ENCODE measurements at regions of chr16 and their contacts with region 1.

Region 1: GRCh38 chr16:11356573-11357331 is 11.5 kb downstream of the RMI2 start:
- DNase-seq: peak; percentile 78 to 81 (median 81)
- ATAC-seq: peak; percentile 94 to 95 (median 94)
- H3K4me3 ChIP-seq: no peak overlapping the region
- H3K27ac ChIP-seq: no peak overlapping the region
- H3K4me1 ChIP-seq: no peaks in the 10 kb centered on the region
- H3K27me3 ChIP-seq: no peaks in the 10 kb centered on the region
- CTCF ChIP-seq: peak; percentile 67 to 76 (median 70)
- POLR2A ChIP-seq: no peak

Region 2: DNA sequence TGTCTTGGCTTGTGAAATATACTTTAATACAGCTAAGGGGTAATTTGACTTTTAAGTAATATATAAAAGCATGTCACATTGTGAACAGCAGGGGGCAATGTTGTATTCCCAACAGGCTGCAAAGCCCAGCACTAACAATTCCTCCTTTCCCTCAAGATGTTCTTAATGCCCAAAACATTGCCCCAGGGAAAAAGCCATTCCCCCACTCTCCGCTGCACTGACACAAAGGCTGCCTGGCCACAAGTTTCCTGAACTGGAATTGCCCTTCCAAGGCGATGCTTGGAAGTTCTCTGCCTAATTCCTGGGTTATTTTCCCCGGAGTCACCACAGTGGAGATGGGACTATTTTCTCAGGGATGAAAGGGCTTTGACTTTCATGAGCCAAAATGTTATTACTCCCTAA is 385.2 kb before region 1 on chr16:
- intact Hi-C with region 1: loop called (anchors 5 to 10 kb)
- DNase-seq: no peak
- ATAC-seq: peak; percentile 77 to 92 (median 86)
- H3K4me3 ChIP-seq: no peak overlapping the region
- H3K27ac ChIP-seq: no peak overlapping the region
- H3K4me1 ChIP-seq: no peaks in the 10 kb centered on the region
- H3K27me3 ChIP-seq: no peaks in the 10 kb centered on the region
- CTCF ChIP-seq: peak; percentile 78 to 83 (median 82)
- POLR2A ChIP-seq: no peak

Region 3: GRCh38 chr16:10979717-10980601 is 376.8 kb before region 1 on chr16:
- intact Hi-C with region 1: loop called (anchors 5 to 10 kb)
- DNase-seq: peak; percentile 84 to 92 (median 92)
- ATAC-seq: peak; percentile 97 to 99 (median 98)
- H3K4me3 ChIP-seq: no peak overlapping the region
- H3K27ac ChIP-seq: peak overlapping the region; percentile 34 to 66 (median 36)
- H3K4me1 ChIP-seq: peaks cover 0 to 8% (median 4%) of the 10 kb centered on the region in 4 donors
- H3K27me3 ChIP-seq: no peaks in the 10 kb centered on the region
- CTCF ChIP-seq: no peak
- POLR2A ChIP-seq: no peak

Measured in right lobe of liver (tissue), 6 donors.